GM10248 (cell line): ENCODE measurements at regions of chr11 and their contacts with region 1.

Region 1: DNA sequence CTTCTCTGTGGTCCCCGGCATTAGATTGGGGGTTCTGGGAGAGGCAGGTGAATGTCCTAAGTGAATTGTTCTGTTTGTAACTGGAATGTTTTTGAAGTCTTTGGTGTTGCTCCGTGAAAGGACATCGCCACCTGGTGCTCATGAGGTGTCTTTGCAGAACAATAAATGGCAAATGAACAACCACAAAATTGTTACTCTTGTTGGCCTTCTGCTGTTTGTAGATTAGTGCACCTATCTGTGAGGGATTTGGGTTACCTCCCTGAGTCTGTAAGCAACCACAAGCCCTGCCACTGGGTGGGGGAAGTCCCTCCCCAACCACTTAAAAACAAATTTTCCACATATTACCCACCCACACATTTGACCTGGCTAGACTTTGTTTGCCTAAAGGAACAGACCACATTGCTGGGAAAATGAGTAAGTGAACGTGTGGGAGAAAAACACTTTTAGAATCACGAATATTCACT is 4.7 kb downstream of the MPEG1 start:
- DNase-seq: peak; percentile 62
- CTCF ChIP-seq: peak; percentile 66

Region 2: DNA sequence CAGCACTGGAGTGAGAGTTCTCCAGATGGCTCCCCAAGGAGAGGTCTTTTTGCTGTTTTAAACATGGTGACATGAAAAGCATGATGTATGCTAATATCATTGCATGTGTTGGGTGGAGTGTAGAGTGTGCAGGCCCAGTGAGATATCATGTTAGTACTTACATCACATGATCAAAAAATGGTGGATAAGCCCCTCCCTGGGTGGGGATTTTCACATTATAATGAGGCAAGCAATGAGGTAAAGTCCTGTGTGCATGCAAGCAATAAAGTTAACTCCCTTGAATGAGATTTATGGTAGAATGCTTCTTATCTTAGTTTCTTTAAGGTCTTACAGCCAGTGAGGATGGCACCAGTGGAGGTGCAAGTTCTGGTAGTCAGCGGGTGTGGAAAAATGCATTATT is 92.5 kb before region 1 on chr11:
- CTCF ChIA-PET with region 1: no interaction called
- POLR2A ChIA-PET with region 1: no interaction called
- DNase-seq: no peak
- CTCF ChIP-seq: no peak

Region 3: DNA sequence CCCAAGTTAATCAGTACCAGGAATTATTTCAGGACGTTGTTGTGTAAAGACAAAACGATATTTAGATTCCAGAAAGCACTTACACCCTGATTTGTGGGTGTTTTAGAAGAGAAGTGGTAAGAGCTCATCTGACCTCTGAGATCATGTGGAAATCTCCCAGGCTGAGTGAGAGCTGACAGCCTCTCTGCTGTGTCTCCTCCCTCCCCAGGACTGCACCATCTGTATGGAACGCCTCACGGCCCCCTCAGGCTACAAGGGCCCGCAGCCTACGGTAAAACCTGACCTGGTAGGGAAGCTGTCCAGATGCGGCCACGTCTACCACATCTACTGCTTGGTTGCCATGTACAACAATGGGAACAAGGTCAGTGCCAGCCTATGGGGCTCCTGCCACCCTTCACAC is 16.1 kb before region 1 on chr11:
- CTCF ChIA-PET with region 1: interaction called, 962 read pairs
- POLR2A ChIA-PET with region 1: no interaction called
- DNase-seq: no peak
- CTCF ChIP-seq: no peak

Region 4: DNA sequence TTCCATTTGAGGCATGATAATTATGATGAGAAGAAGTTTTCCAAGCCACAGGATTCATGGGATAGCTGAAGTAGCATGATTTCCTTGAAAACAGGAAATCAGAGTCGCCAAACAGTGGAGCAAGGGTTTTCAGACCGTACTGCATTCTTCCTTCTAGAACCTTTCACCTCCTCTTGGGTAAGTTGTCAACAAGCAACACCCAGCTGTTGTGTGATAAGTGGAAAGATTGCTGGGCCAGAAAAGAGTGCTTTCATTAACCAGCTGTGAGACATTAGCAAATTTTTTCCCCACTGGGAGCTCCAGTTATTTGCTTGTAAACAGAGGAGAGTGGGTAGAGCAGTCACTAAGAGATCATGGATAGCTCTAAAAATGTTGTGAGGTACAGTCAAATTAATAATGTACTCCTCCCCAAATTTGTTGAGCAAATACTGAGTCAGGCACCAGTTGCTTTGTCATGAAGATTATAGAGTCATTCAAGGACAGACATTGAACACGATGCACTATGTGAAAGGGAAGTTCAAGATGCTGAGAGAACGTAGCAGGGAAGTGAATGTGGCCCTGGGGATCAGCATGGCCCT is 16.4 kb after region 1 on chr11:
- CTCF ChIA-PET with region 1: interaction called, 12 read pairs
- POLR2A ChIA-PET with region 1: no interaction called
- DNase-seq: no peak
- CTCF ChIP-seq: no peak

Region 5: GRCh38 chr11:59380263-59381059 is 172.4 kb after region 1 on chr11:
- CTCF ChIA-PET with region 1: no interaction called
- POLR2A ChIA-PET with region 1: no interaction called
- DNase-seq: peak; percentile 15
- CTCF ChIP-seq: no peak

Region 6: GRCh38 chr11:59417023-59417422 is 209.0 kb after region 1 on chr11:
- CTCF ChIA-PET with region 1: no interaction called
- POLR2A ChIA-PET with region 1: no interaction called
- DNase-seq: no peak
- CTCF ChIP-seq: no peak